ENCODE measurements at regions of chr7 and their contacts with region 1.

Region 1: GRCh38 chr7:66204822-66205740 is at the start of gene TPST1:
- DNase-seq: peak; percentile 89 to 96 (median 92)
- H3K4me3 ChIP-seq: peak within 1 kb of the TSS; percentile 61
- H3K27ac ChIP-seq: peak within 1 kb of the TSS; percentile 37 to 65
- H3K4me1 ChIP-seq: peaks cover 4% of the 10 kb centered on the region
- H3K27me3 ChIP-seq: no peaks in the 10 kb centered on the region
- CTCF ChIP-seq: peak; percentile 80 to 93 (median 93)
- EP300 ChIP-seq: no peak
- POLR2A ChIP-seq: peak; percentile 92
- total RNA-seq, gene TPST1: 24.0 to 42.5 (median 30.3) TPM

Region 2: GRCh38 chr7:66140924-66141323 is 64.2 kb before region 1 on chr7:
- intact Hi-C with region 1: loop called in 1 of 4 experiments (anchors 10 kb)
- DNase-seq: peak; percentile 74 to 84 (median 79)
- H3K4me3 ChIP-seq: no peak overlapping the region
- H3K27ac ChIP-seq: peak overlapping the region in 1 of 2 donors; percentile 50
- H3K4me1 ChIP-seq: peaks cover 15% of the 10 kb centered on the region
- H3K27me3 ChIP-seq: no peaks in the 10 kb centered on the region
- CTCF ChIP-seq: peak; percentile 44 to 65 (median 55)
- EP300 ChIP-seq: no peak
- POLR2A ChIP-seq: no peak

Region 3: GRCh38 chr7:66306242-66306641 is 101.2 kb after region 1 on chr7:
- intact Hi-C with region 1: no loop called
- DNase-seq: no peak
- H3K4me3 ChIP-seq: no peak overlapping the region
- H3K27ac ChIP-seq: no peak overlapping the region
- H3K4me1 ChIP-seq: peaks cover 10% of the 10 kb centered on the region
- H3K27me3 ChIP-seq: no peaks in the 10 kb centered on the region
- CTCF ChIP-seq: no peak
- EP300 ChIP-seq: no peak
- POLR2A ChIP-seq: no peak

Region 4: DNA sequence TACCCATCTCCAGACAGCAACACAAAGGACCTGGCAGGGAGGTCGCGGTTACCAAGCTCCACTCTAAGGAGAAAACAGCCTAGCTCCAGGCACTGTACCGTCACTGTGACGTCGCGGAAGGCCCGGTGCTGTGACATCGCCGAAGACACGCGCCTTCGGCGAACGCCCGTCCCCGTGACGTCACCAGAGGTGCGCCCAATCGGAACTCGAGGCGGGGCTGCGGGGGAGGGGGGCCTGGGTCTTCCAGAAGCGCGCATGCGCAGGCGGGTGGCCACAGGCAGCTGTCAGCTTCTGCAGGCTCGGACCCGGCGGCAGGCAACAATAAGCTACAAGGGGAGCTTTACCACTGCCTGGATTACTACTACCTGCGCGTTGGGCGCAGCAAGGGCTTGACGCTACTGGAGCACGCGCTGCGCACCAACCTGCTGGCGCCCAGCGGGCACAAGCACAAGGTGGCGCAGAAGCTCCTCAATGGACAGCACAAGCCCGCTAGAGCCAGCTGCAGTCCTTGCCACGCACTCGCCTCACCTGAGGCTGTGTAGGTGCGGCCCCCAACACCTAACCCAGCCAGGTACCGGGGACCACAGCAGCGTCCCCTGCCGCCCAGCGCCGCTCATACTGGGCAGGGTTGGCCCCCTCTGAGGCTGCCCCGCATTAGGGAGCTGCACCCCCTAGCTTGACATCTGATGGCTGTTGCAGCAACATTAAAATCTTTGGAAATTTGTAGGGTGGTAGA is 208.5 kb after region 1 on chr7:
- intact Hi-C with region 1: loop called in 1 of 4 experiments (anchors 5 kb)
- DNase-seq: peak; percentile 93 to 95 (median 94)
- H3K4me3 ChIP-seq: peak overlapping the region; percentile 42
- H3K27ac ChIP-seq: peak overlapping the region; percentile 53 to 88
- H3K4me1 ChIP-seq: peaks cover 1% of the 10 kb centered on the region
- H3K27me3 ChIP-seq: no peaks in the 10 kb centered on the region
- CTCF ChIP-seq: peak in 2 of 3 donors; percentile 52 to 55
- EP300 ChIP-seq: peak; percentile 17
- POLR2A ChIP-seq: peak; percentile 42

Region 5: DNA sequence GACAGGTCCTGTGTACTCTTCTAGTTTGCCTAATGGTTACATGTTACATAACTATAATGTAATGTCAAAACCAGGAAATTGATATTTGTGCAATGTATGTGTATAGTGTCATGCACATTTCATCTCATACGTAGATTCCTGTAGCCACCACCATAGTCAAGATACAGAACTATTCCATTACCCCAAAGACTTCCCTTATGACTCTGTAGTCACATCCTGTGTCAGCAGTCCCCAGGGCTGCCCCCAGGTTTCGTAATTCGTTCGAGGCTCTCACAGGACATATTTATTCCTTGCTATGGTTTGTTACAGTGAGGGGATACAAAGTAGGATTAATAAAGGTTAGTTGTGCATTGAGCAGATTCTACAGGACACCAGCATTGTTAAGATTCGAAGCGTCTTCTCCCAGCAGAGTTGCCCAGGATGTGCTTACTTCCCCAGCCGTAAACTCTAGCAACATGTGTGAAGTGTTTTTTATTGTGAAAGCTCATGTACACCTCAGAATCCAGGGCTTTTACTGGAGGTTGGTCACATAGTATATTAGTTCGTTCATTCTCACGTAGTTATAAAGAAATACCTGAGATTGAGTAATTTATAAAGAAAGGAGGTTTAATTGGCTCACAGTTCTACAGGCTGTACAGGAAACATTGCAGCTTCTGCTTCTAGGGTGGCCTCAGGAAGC is 554.0 kb after region 1 on chr7:
- intact Hi-C with region 1: no loop called
- DNase-seq: no peak
- H3K4me3 ChIP-seq: no peak overlapping the region
- H3K27ac ChIP-seq: no peak overlapping the region
- H3K4me1 ChIP-seq: no peaks in the 10 kb centered on the region
- H3K27me3 ChIP-seq: no peaks in the 10 kb centered on the region
- CTCF ChIP-seq: no peak
- EP300 ChIP-seq: no peak
- POLR2A ChIP-seq: no peak

Measured in ovary (tissue), 10 donors.